ENCODE measurements at regions of chr7 and their contacts with region 1.

Region 1: GRCh38 chr7:147245292-147245691 is 1128.7 kb downstream of the CNTNAP2 start:
- DNase-seq: no peak
- ATAC-seq: no peak
- H3K4me3 Mint-ChIP-seq: no peak overlapping the region
- H3K27ac Mint-ChIP-seq: no peak overlapping the region
- H3K4me1 Mint-ChIP-seq: peaks cover 2% of the 10 kb centered on the region
- H3K27me3 Mint-ChIP-seq: no peaks in the 10 kb centered on the region
- CTCF ChIP-seq: no peak

Region 2: DNA sequence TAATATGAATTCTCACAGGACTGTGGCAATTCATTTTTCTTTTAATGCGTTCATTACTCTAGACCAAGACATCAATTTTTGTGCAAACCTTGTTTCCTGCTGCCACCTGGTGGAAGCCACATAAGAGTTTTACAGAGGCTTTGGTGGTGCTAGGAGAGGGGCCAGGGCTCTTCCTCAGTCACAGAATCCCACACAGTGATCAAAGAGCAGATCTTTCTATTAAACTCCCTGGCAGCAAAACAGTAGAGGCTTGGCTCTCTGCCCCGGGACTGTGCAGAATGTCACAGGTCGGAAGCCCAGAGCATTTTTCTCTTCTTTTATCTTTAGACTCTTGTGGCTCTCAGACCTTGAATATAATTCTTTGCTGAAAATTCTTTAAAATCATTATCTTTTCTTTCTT is 838.8 kb after region 1 on chr7:
- CTCF ChIA-PET with region 1: no interaction called
- POLR2A ChIA-PET with region 1: no interaction called
- intact Hi-C with region 1: loop called (anchors 2 kb)
- DNase-seq: no peak
- ATAC-seq: no peak
- H3K4me3 Mint-ChIP-seq: no peak overlapping the region
- H3K27ac Mint-ChIP-seq: no peak overlapping the region
- H3K4me1 Mint-ChIP-seq: no peaks in the 10 kb centered on the region
- H3K27me3 Mint-ChIP-seq: peaks cover 11% of the 10 kb centered on the region
- CTCF ChIP-seq: no peak

Measured in activated B cell treated with CpG ODN at 0.5 μM for 24 hours (primary cell).